WTC11 (cell line): ENCODE measurements at regions of chr1 and their contacts with region 1.

Region 1: DNA sequence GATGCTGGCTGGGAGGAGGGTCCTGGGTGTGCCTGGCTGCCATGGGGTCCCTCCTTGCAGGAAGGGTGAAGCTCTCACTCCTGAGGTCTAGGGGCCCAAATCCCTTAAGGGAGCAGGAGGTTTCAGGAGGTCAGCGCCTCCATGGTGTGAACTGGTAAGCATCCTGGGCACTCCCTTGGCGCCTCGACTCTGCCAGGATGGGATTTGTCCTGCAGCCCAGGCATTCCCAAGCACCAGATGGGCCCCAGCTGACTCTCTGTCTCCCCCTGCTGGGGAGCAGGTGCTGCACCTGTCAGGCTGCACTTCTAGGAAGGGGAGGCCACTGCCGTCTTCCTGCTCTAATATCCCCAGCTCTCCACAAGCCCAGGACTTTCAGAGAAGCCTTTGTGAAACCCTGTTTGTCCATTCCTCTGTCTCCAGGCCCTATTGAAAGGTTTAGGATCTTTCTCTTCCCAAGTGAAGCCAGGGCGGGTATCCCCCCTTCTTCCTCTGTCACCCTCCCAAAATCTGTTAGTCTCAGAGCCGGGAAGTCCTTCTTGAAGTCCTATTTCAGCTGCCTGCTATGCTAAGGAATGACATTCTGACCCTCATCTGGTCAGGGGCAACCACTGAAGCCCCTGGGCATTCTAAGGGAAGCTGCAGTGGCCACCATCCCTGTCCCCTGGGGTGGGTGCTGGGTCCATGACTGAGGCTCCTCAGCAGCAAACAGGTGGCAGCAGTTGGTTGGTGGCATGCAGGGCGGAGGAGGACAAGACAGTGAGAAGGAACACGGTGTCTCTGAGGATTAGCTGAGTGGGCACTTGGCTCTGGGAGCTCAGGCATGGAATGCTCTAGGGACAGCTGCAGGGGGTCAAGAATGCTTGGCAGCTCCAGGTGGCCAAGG is 3.3 kb downstream of the MYBPH start:
- DNase-seq: peak; percentile 88
- ATAC-seq: peak; percentile 91
- H3K4me3 Mint-ChIP-seq: no peak overlapping the region
- H3K27ac Mint-ChIP-seq: no peak overlapping the region
- H3K4me1 Mint-ChIP-seq: peaks cover 11% of the 10 kb centered on the region
- H3K27me3 Mint-ChIP-seq: no peaks in the 10 kb centered on the region
- CTCF ChIP-seq: peak; percentile 96

Region 2: DNA sequence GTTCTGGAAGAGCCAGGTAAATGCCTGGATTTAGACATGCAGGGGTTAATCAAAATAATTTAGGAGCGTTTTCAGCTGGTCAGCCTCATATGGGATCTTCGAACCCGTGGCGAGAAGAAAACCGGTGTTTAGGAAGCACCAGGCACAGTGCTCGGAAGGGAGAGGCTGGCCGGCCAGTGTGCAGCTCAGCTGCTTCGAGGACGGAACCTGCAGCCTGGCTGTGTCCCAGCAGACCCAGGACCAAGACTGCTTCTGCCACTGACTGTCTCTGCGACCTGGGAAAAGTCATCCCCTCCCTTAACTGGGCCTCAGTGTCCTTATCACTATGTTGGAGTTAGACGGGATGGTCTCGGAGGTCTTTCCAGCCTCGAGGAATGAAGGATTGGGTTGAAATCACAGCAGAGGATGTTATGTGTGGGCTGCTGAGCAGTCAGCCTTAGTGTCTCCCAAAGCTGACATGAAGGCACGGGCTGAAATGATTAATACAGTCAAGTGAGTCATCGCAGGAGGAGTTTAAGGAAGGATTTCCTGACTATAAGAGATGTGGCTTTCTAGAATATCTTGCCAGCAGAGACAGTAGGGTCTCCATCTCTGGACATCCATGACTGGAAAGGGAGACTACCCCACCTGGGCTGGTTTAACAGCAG is 125.3 kb before region 1 on chr1:
- CTCF ChIA-PET with region 1: interaction called, 10 read pairs
- POLR2A ChIA-PET with region 1: no interaction called
- DNase-seq: no peak
- ATAC-seq: no peak
- H3K4me3 Mint-ChIP-seq: no peak overlapping the region
- H3K27ac Mint-ChIP-seq: no peak overlapping the region
- H3K4me1 Mint-ChIP-seq: peaks cover 20% of the 10 kb centered on the region
- H3K27me3 Mint-ChIP-seq: no peaks in the 10 kb centered on the region; the same call in 1 of the 2 replicates
- CTCF ChIP-seq: no peak

Region 3: GRCh38 chr1:203084588-203085502 is 87.5 kb before region 1 on chr1:
- CTCF ChIA-PET with region 1: interaction called, 16 read pairs
- POLR2A ChIA-PET with region 1: no interaction called
- DNase-seq: peak; percentile 84
- ATAC-seq: peak; percentile 59
- H3K4me3 Mint-ChIP-seq: no peak overlapping the region
- H3K27ac Mint-ChIP-seq: no peak overlapping the region
- H3K4me1 Mint-ChIP-seq: peaks cover 34% of the 10 kb centered on the region
- H3K27me3 Mint-ChIP-seq: no peaks in the 10 kb centered on the region; the same call in 1 of the 2 replicates
- CTCF ChIP-seq: peak; percentile 88

Region 4: GRCh38 chr1:203133970-203134725 is 38.2 kb before region 1 on chr1:
- CTCF ChIA-PET with region 1: interaction called, 79 read pairs
- POLR2A ChIA-PET with region 1: no interaction called
- DNase-seq: no peak
- ATAC-seq: peak; percentile 40
- H3K4me3 Mint-ChIP-seq: no peak overlapping the region
- H3K27ac Mint-ChIP-seq: no peak overlapping the region
- H3K4me1 Mint-ChIP-seq: peaks cover 11% of the 10 kb centered on the region
- H3K27me3 Mint-ChIP-seq: peaks cover 7% of the 10 kb centered on the region
- CTCF ChIP-seq: no peak

Region 5: DNA sequence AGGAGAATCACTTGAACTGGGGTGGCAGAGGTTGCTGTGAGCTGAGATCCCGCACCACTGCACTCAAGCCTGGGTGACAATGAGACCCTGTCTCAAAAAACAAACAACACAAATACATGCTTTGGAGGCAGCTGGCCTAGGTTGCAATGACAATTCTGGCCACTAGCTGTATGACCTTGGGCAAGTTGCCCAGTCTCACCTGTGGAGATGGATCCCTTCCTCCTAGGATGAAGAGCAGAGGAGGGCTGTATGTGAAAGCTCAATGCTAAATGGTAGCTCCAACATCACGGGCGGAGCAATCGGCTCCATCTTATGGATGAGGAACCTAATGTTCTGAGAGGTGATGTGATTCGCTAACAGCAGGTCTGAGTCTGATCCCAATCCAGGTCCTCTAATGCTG is 24.2 kb before region 1 on chr1:
- CTCF ChIA-PET with region 1: interaction called, 26 read pairs
- POLR2A ChIA-PET with region 1: no interaction called
- DNase-seq: peak; percentile 44
- ATAC-seq: peak; percentile 50
- H3K4me3 Mint-ChIP-seq: no peak overlapping the region
- H3K27ac Mint-ChIP-seq: no peak overlapping the region
- H3K4me1 Mint-ChIP-seq: peaks cover 87% of the 10 kb centered on the region
- H3K27me3 Mint-ChIP-seq: no peaks in the 10 kb centered on the region
- CTCF ChIP-seq: no peak

Region 6: DNA sequence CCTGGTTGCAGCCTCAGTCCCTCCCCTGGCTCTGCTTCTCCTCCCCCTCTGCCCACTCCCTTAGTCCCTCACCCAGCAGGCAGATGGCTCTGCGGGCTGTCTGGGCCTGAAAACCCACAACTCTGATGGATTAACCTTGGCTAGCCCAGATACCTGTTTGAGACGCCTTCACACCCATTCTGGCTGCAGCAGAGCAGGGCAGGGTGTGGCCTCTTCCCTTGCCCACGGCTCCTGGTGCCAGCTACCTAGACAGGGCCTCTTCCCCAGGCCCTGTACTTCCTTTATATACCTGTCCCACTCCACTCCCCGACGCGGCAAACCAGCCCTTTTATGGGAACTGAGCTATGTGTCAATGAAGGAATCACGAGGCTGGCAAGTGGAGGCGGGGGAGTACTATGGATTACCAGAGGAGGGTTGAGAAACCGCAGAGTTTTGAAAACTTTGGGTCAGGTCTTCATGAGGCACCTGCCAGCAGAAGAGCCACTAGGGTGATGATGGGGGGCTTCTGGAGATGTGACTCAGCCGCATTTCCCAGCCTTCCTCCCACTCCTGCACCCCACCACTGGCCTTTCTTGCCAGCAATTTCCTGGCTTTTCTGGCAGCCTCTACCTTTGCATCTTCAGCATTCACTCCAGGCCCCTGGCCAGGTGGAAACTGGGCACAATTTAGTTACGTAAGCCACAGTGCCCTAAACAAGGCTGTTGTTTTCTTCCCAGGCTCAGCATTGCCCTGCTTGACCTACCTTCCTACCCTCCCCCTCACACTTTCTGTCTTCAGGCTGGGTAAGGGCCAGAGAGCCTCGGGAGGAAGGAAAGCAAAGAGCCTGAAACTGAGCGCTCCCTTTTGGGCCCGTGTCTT is 14.3 kb after region 1 on chr1 and contains the start of gene CHI3L1:
- CTCF ChIA-PET with region 1: interaction called, 20 read pairs
- POLR2A ChIA-PET with region 1: no interaction called
- DNase-seq: no peak
- ATAC-seq: peak; percentile 65
- H3K4me3 Mint-ChIP-seq: peak within 1 kb of the TSS; percentile 32; the same call in 1 of the 2 replicates
- H3K27ac Mint-ChIP-seq: no peak within 1 kb of the TSS
- H3K4me1 Mint-ChIP-seq: peaks cover 32% of the 10 kb centered on the region
- H3K27me3 Mint-ChIP-seq: peaks cover 2% of the 10 kb centered on the region; the same call in 1 of the 2 replicates
- CTCF ChIP-seq: no peak
- total RNA-seq, gene CHI3L1: 0.24 to 0.41 TPM (median 0.27 TPM) in 3 replicates

Region 7: GRCh38 chr1:203199816-203200571 is 27.6 kb after region 1 on chr1:
- CTCF ChIA-PET with region 1: interaction called, 12 read pairs
- POLR2A ChIA-PET with region 1: no interaction called
- DNase-seq: no peak
- ATAC-seq: no peak
- H3K4me3 Mint-ChIP-seq: no peak overlapping the region
- H3K27ac Mint-ChIP-seq: no peak overlapping the region
- H3K4me1 Mint-ChIP-seq: no peaks in the 10 kb centered on the region
- H3K27me3 Mint-ChIP-seq: peaks cover 3% of the 10 kb centered on the region; the same call in 1 of the 2 replicates
- CTCF ChIP-seq: no peak

Region 8: DNA sequence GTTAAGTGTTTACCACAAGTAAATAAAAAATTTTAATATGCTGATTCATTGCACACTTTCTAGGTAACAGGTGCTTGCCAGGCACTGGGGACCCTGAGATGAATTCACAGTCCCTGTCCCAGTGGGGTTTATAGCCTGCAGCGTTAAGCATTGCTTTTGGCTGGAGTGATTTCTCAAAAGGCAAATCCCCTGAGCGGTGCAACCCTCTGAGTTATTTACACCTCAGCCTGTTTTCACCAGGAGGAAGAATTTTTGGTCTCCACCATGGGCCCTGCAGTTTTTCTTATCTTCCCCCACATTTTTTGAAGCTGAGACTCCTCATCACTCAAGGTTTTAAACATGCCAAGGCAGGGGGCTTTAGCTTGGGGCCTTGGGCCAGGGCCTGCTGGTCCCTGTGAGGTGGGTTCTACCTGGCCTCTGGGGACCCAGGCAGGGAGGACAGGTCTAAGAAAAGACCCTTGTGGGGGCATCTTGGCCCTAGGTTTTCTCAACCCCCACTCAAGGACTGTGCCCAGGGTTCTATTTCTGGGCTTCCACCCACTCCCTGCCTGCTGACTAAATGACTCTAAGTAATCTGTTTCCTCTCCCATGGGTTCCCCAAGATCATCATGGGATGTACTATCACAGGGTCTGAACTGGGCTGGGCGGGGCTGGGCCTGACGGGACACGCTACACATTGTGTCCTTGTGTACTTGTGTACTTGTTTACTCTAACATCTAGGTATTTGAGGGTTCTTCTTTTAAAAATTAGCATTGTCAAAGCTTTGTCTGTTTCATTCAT is 67.3 kb after region 1 on chr1:
- CTCF ChIA-PET with region 1: no interaction called
- POLR2A ChIA-PET with region 1: no interaction called
- DNase-seq: no peak
- ATAC-seq: no peak
- H3K4me3 Mint-ChIP-seq: no peak overlapping the region
- H3K27ac Mint-ChIP-seq: no peak overlapping the region
- H3K4me1 Mint-ChIP-seq: no peaks in the 10 kb centered on the region
- H3K27me3 Mint-ChIP-seq: peaks cover 42% of the 10 kb centered on the region
- CTCF ChIP-seq: no peak

Region 9: DNA sequence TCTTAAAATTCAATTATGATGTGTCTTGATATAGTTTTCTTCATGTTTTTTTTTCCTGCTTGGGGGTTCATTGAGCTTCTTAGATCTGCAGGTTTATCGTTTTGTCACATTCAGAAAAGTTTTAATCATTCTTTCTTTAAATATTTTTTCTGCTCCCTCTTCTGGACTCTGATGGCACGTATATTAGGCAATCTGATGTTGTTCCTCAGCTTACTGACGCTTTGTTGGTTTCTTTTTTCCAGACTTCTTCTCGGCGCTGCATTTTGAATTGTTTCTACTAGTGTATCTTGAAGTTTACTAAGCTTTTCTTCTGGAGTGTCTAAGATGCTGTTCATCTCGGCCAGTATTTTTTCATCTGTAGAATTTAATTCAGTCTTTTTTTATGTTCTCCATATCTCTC is 223.4 kb after region 1 on chr1:
- CTCF ChIA-PET with region 1: no interaction called
- POLR2A ChIA-PET with region 1: no interaction called
- DNase-seq: no peak
- ATAC-seq: no peak
- H3K4me3 Mint-ChIP-seq: no peak overlapping the region
- H3K27ac Mint-ChIP-seq: no peak overlapping the region
- H3K4me1 Mint-ChIP-seq: no peaks in the 10 kb centered on the region
- H3K27me3 Mint-ChIP-seq: no peaks in the 10 kb centered on the region
- CTCF ChIP-seq: no peak